ENCODE measurements at regions of chr6 and their contacts with region 1.

Region 1: GRCh38 chr6:99536491-99536890 is 21.3 kb upstream of the USP45 start:
- DNase-seq: no peak
- H3K4me3 ChIP-seq: no peak overlapping the region
- H3K27ac ChIP-seq: no peak overlapping the region
- H3K4me1 ChIP-seq: no peaks in the 10 kb centered on the region
- H3K27me3 ChIP-seq: no peaks in the 10 kb centered on the region
- CTCF ChIP-seq: no peak
- EP300 ChIP-seq: no peak
- POLR2A ChIP-seq: no peak
- RAD21 ChIP-seq: no peak

Region 2: GRCh38 chr6:99520855-99521632 is 15.4 kb before region 1 on chr6:
- CTCF ChIA-PET with region 1: interaction called, 30 read pairs
- POLR2A ChIA-PET with region 1: interaction called, 31 read pairs
- DNase-seq: peak in 1 of 2 experiments; percentile 88
- H3K4me3 ChIP-seq: peak overlapping the region; percentile 73 to 99 (median 94)
- H3K27ac ChIP-seq: peak overlapping the region; percentile 95
- H3K4me1 ChIP-seq: peaks cover 0 to 4% (median 2%) of the 10 kb centered on the region in 4 experiments; a peak in 1 of 7 replicates
- H3K27me3 ChIP-seq: no peaks in the 10 kb centered on the region
- CTCF ChIP-seq: peak; percentile 74 to 79 (median 78)
- EP300 ChIP-seq: no peak
- POLR2A ChIP-seq: peak; percentile 98 to 99
- RAD21 ChIP-seq: peak; percentile 46 to 60